ENCODE measurements at regions of chr2 and their contacts with region 1.

Region 1: DNA sequence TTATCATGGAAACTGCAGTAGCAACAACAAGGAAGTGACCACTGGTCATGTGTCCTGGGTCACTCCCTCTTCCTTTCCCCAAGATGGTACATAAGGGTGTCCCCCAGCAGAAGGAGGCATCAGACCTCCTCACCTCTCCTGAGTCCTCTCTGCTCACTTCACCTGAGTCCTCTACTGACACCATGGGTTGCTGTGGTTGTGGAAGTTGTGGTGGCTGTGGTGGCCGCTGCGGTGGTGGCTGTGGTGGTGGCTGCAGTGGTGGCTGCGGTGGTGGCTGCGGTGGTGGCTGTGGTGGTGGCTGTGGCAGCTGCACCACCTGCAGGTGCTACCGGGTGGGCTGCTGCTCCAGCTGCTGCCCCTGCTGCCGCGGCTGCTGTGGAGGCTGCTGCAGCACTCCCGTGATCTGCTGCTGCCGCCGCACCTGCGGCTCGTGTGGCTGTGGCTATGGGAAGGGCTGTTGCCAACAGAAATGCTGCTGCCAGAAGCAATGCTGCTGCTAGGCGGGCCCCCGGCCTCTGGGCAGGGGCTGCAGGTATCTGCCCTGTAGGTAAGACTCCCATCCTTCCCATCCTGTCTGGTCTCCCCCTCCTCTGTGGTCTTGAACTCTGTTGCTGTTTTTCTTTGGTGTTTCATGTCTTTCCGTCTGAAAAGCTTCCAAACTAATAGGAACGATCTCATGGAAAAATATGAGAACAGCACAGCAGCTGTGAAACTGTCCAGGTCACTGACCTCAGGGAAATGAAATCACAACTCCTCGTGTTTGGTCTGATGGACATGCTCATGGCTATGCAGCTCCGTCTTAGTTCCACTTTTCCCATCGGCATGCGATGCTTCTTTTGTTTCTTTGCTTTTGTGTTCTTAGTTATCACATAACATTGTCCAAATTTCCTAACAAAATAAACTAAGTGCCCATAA is at the start of gene SCYGR4:
- DNase-seq: no peak
- total RNA-seq, gene SCYGR4: not detected

Region 2: DNA sequence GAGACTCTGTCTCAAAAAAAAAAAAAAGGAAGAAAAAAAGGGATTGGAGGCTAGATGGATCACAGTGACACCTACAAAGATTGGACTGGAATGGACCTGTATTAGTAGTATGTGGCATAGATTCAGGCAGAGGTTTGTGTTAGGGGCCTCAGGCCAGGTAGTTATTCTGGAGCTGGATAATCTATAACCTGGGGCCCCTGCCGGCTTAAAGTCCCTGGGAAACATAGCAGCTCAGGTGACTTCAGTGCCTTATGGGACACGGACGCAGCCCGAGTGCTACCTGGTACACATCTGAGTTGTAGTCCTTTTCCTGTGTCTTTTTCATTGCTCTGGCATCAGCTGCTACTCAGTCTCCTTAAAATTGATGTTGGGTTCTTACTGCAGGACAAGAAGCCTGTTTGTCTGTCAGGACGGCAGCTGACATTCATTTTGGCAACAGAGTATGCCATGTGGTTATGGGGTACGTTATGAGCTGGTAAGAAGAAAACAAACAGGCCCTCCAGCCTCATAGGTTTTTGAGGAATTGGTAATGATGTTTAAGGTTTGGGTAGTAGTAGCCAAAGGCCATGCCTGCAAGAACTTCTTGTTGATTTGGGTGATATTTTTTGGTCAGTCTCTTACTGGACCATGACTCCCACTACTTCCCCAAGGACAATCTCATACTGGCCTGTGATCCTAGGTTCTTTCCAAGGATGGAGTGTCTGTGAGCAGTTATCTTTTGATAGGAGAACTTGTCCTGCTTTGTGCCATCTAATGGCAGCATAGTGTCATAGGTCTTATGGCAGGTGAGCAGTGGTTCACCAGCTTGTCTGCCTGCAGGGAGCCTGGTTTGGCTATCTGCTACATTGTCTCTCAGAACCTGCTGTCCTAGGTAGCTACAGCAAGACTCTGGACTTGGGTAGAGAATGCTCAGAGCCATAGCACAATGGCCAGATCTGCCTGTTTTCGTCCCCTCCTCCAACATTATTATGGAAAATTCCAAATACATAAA is 117.7 kb before region 1 on chr2:
- intact Hi-C with region 1: loop called in 1 of 2 experiments (anchors 5 kb)
- DNase-seq: no peak

Region 3: GRCh38 chr2:227990937-227991336 is 373.4 kb after region 1 on chr2:
- intact Hi-C with region 1: no loop called
- DNase-seq: no peak

Region 4: GRCh38 chr2:229111744-229112143 is 1494.2 kb after region 1 on chr2:
- intact Hi-C with region 1: no loop called
- DNase-seq: no peak

Measured in posterior vena cava (tissue), 2 donors.